IMR-90 (cell line): ENCODE measurements at regions of chr3 and their contacts with region 1.

Region 1: GRCh38 chr3:13574798-13575451 is 26.0 kb downstream of the FBLN2 start:
- DNase-seq: peak; percentile 18
- ATAC-seq: peak; percentile 28; the same call in 1 of the 2 replicates
- H3K4me3 ChIP-seq: no peak overlapping the region
- H3K27ac ChIP-seq: no peak overlapping the region
- H3K4me1 ChIP-seq: 0 out of 2 replicates have a peak, but pooled peaks cover 1% of the 10 kb centered on the region
- H3K27me3 ChIP-seq: no peaks in the 10 kb centered on the region
- CTCF ChIP-seq: no peak
- POLR2A ChIP-seq: no peak
- RAD21 ChIP-seq: no peak

Region 2: GRCh38 chr3:11969986-11970385 is 1604.9 kb before region 1 on chr3:
- CTCF ChIA-PET with region 1: no interaction called
- POLR2A ChIA-PET with region 1: no interaction called
- dilution Hi-C with region 1: no loop called
- in situ Hi-C with region 1: no loop called
- intact Hi-C with region 1: no loop called
- DNase-seq: no peak
- ATAC-seq: no peak
- H3K4me3 ChIP-seq: no peak overlapping the region
- H3K27ac ChIP-seq: no peak overlapping the region
- H3K4me1 ChIP-seq: no peaks in the 10 kb centered on the region
- H3K27me3 ChIP-seq: peaks cover 2% of the 10 kb centered on the region; the same call in 1 of the 2 replicates
- CTCF ChIP-seq: no peak
- POLR2A ChIP-seq: no peak
- RAD21 ChIP-seq: no peak

Region 3: GRCh38 chr3:13588221-13588701 is 13.3 kb after region 1 on chr3:
- CTCF ChIA-PET with region 1: no interaction called
- POLR2A ChIA-PET with region 1: no interaction called
- dilution Hi-C with region 1: no loop called
- in situ Hi-C with region 1: no loop called
- intact Hi-C with region 1: no loop called
- DNase-seq: no peak
- ATAC-seq: no peak
- H3K4me3 ChIP-seq: no peak overlapping the region
- H3K27ac ChIP-seq: no peak overlapping the region
- H3K4me1 ChIP-seq: no peaks in the 10 kb centered on the region; the same call in 1 of the 2 replicates
- H3K27me3 ChIP-seq: no peaks in the 10 kb centered on the region
- CTCF ChIP-seq: no peak
- POLR2A ChIP-seq: no peak
- RAD21 ChIP-seq: no peak

Region 4: GRCh38 chr3:13600941-13601576 is 26.1 kb after region 1 on chr3:
- CTCF ChIA-PET with region 1: no interaction called
- POLR2A ChIA-PET with region 1: no interaction called
- dilution Hi-C with region 1: no loop called
- in situ Hi-C with region 1: no loop called
- intact Hi-C with region 1: loop called (anchors 1 kb)
- DNase-seq: peak; percentile 80
- ATAC-seq: peak; percentile 50
- H3K4me3 ChIP-seq: no peak overlapping the region
- H3K27ac ChIP-seq: no peak overlapping the region
- H3K4me1 ChIP-seq: peaks cover 5% of the 10 kb centered on the region; the same call in 1 of the 2 replicates
- H3K27me3 ChIP-seq: no peaks in the 10 kb centered on the region; the same call in 1 of the 2 replicates
- CTCF ChIP-seq: no peak
- POLR2A ChIP-seq: no peak
- RAD21 ChIP-seq: no peak